Stomach (tissue), 19 donors: ENCODE measurements at regions of chr2 and their contacts with region 1.

Region 1: GRCh38 chr2:66574701-66575624 is 140.0 kb downstream of the MEIS1 start:
- DNase-seq: peak in 1 of 2 donors; percentile 96
- H3K4me3 ChIP-seq: peak overlapping the region; percentile 55 to 62 (median 56)
- H3K27ac ChIP-seq: peak overlapping the region in 4 of 5 donors; percentile 84 to 94 (median 86)
- H3K4me1 ChIP-seq: peaks cover 21 to 69% (median 46%) of the 10 kb centered on the region in 4 donors
- H3K27me3 ChIP-seq: peaks cover 7 to 62% (median 56%) of the 10 kb centered on the region in 3 donors
- CTCF ChIP-seq: peak in 3 of 7 experiments; percentile 10 to 49 (median 44)
- EP300 ChIP-seq: no peak
- POLR2A ChIP-seq: no peak

Region 2: DNA sequence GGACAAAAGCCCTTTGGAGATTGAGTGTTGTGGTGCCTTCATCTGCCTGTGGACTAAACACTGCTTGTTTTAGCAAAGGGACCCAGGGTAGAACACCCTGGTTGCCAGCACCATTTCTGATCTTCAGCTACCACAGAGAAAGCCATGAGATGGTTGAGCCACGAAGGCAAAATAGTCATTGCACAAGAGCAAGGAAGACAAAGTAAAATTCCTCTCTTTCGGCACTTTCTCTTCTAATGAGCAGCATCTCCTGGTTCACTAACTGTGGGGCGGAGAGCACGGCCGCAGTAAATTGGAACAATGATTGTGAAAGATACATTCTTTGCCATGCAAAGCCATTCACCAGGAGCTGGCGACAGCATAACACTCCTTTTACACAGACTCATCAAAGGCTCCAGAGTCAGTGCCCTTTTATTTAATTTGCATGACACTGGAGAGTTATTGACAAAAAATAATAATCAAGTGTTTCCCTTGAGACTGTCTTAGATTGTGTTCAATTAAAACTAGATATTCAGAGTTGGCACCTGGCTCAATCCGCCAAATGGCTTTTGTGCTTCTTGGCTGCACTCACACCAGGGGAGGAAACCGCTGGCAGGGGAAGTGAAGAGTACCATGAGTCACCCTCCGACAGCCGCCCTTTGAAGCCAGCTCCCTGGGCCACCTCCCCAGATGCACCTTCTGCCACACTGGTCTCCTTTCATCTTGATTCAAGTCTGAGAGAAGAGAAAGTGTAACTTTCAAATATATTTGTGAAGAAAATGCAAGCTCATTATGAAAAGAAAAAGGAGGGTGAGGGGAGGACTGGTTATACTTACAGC is 240.5 kb before region 1 on chr2:
- intact Hi-C with region 1: no loop called
- DNase-seq: peak in 1 of 2 donors; percentile 10
- H3K4me3 ChIP-seq: no peak overlapping the region
- H3K27ac ChIP-seq: no peak overlapping the region
- H3K4me1 ChIP-seq: no peaks in the 10 kb centered on the region
- H3K27me3 ChIP-seq: no peaks in the 10 kb centered on the region
- CTCF ChIP-seq: no peak
- EP300 ChIP-seq: no peak
- POLR2A ChIP-seq: no peak

Region 3: DNA sequence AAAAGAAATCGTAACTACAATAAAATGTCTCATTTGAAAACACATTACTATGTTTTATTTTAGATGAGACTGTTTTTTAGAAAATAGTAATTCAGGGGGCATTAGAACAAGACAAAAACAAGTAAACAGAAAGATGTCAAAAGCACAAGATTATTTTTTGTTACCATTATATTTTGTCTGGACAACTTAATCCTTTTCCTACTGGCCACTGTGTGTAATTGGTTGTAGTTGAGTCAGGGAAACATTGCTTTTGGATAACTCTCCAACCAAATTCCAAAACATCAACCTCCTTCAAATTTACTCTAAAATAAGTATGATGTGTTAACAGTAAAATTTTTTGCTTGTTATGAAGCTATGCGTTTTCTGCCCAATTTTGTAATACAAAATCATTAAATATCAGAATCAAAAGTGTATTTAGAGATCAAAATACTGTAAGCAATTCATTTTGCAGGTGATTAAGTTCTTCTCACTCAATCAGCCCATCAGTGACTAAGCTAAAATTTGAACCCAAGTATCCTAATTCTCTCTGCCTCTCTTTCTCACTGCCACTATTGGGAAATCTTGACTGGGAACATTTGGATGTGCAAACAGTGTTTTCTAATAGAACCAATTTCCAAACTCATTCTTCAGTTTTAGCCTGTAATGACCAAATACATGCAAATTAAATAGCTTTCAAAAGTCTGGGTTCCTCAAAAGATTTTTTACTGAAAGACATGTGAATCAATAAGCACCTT is 151.4 kb before region 1 on chr2:
- intact Hi-C with region 1: loop called (anchors 5 kb)
- DNase-seq: no peak
- H3K4me3 ChIP-seq: no peak overlapping the region
- H3K27ac ChIP-seq: peak overlapping the region in 1 of 5 donors; percentile 20
- H3K4me1 ChIP-seq: peaks cover 5 to 27% (median 13%) of the 10 kb centered on the region in 4 donors
- H3K27me3 ChIP-seq: peaks cover 8 to 43% (median 20%) of the 10 kb centered on the region in 3 donors
- CTCF ChIP-seq: no peak
- EP300 ChIP-seq: no peak
- POLR2A ChIP-seq: no peak

Region 4: GRCh38 chr2:66439812-66440542 is 135.0 kb before region 1 on chr2:
- intact Hi-C with region 1: loop called (anchors 5 kb)
- DNase-seq: no peak
- H3K4me3 ChIP-seq: peak overlapping the region; percentile 70 to 83 (median 72)
- H3K27ac ChIP-seq: peak overlapping the region in 4 of 5 donors; percentile 88 to 93 (median 90)
- H3K4me1 ChIP-seq: peaks cover 0 to 12% (median 2%) of the 10 kb centered on the region in 4 donors
- H3K27me3 ChIP-seq: peaks cover 0 to 57% (median 5%) of the 10 kb centered on the region in 3 donors
- CTCF ChIP-seq: no peak
- EP300 ChIP-seq: no peak
- POLR2A ChIP-seq: no peak

Region 5: DNA sequence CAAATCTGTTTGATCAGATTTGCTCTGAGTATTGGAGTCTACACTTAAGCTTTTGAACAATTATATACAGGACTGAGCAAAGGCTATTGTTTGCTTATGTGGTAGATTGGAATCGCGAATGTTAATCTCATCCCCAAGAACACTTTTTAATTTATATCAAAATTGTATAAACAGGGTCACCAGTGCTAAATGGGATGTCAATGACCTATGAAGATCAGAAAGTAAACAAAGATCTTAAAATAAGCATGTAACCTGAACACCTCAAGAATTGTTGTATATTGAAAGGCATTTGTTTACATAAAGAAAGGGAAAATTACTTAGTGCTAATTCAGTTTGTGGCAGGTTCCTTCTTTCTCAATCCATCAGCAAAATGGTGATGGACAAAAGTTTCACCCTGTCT is 65.5 kb after region 1 on chr2:
- intact Hi-C with region 1: no loop called
- DNase-seq: no peak
- H3K4me3 ChIP-seq: no peak overlapping the region
- H3K27ac ChIP-seq: no peak overlapping the region
- H3K4me1 ChIP-seq: no peaks in the 10 kb centered on the region
- H3K27me3 ChIP-seq: no peaks in the 10 kb centered on the region
- CTCF ChIP-seq: no peak
- EP300 ChIP-seq: no peak
- POLR2A ChIP-seq: no peak